Aorta (tissue), 5 donors: ENCODE measurements at regions of chr2 and their contacts with region 1.

Region 1: GRCh38 chr2:122451040-122451439 is 695.6 kb downstream of the TSN start:
- DNase-seq: no peak
- ATAC-seq: no peak
- H3K4me3 ChIP-seq: no peak overlapping the region
- H3K27ac ChIP-seq: no peak overlapping the region
- H3K4me1 ChIP-seq: no peaks in the 10 kb centered on the region
- H3K27me3 ChIP-seq: no peaks in the 10 kb centered on the region

Region 2: GRCh38 chr2:121897335-121897970 is 553.6 kb before region 1 on chr2:
- intact Hi-C with region 1: no loop called
- DNase-seq: no peak
- ATAC-seq: peak; percentile 26
- H3K4me3 ChIP-seq: no peak overlapping the region
- H3K27ac ChIP-seq: no peak overlapping the region
- H3K4me1 ChIP-seq: no peaks in the 10 kb centered on the region
- H3K27me3 ChIP-seq: no peaks in the 10 kb centered on the region

Region 3: GRCh38 chr2:121974897-121975661 is 476.0 kb before region 1 on chr2:
- intact Hi-C with region 1: loop called in 1 of 2 experiments (anchors 5 kb)
- DNase-seq: peak in 1 of 2 donors; percentile 63
- ATAC-seq: peak; percentile 82
- H3K4me3 ChIP-seq: no peak overlapping the region
- H3K27ac ChIP-seq: no peak overlapping the region
- H3K4me1 ChIP-seq: no peaks in the 10 kb centered on the region
- H3K27me3 ChIP-seq: no peaks in the 10 kb centered on the region

Region 4: GRCh38 chr2:122191341-122191740 is 259.7 kb before region 1 on chr2:
- intact Hi-C with region 1: loop called in 1 of 2 experiments (anchors 10 kb)
- DNase-seq: no peak
- ATAC-seq: no peak
- H3K4me3 ChIP-seq: no peak overlapping the region
- H3K27ac ChIP-seq: no peak overlapping the region
- H3K4me1 ChIP-seq: no peaks in the 10 kb centered on the region
- H3K27me3 ChIP-seq: no peaks in the 10 kb centered on the region